Activated CD4-positive, alpha-beta memory T cell treated with anti-CD3 and anti-CD28 coated beads, Interleukin-2, amount 10 ng/mL, durations not matched to agents 7 days and 5 days (primary cell): ENCODE measurements at regions of chr16 and their contacts with region 1.

Region 1: GRCh38 chr16:27235055-27235937 is 32.0 kb downstream of the KDM8 start:
- DNase-seq: peak; percentile 96
- H3K4me3 Mint-ChIP-seq: peak overlapping the region; percentile 67
- H3K27ac Mint-ChIP-seq: peak overlapping the region; percentile 100
- H3K4me1 Mint-ChIP-seq: peaks cover 98% of the 10 kb centered on the region
- H3K27me3 Mint-ChIP-seq: no peaks in the 10 kb centered on the region

Region 2: GRCh38 chr16:27203429-27204231 is 31.7 kb before region 1 on chr16 and contains the start of gene KDM8:
- CTCF ChIA-PET with region 1: interaction called, 23 read pairs
- POLR2A ChIA-PET with region 1: interaction called, 51 read pairs
- DNase-seq: peak; percentile 100
- H3K4me3 Mint-ChIP-seq: peak within 1 kb of the TSS; percentile 95
- H3K27ac Mint-ChIP-seq: peak within 1 kb of the TSS; percentile 99
- H3K4me1 Mint-ChIP-seq: peaks cover 56% of the 10 kb centered on the region
- H3K27me3 Mint-ChIP-seq: no peaks in the 10 kb centered on the region
- total RNA-seq, gene KDM8: 12.7 to 14.3 TPM

Region 3: GRCh38 chr16:27258241-27258734 is 23.0 kb after region 1 on chr16:
- CTCF ChIA-PET with region 1: interaction called, 10 read pairs
- POLR2A ChIA-PET with region 1: interaction called, 114 read pairs
- DNase-seq: no peak
- H3K4me3 Mint-ChIP-seq: no peak overlapping the region
- H3K27ac Mint-ChIP-seq: no peak overlapping the region
- H3K4me1 Mint-ChIP-seq: peaks cover 67% of the 10 kb centered on the region
- H3K27me3 Mint-ChIP-seq: no peaks in the 10 kb centered on the region

Region 4: GRCh38 chr16:27286451-27286850 is 51.2 kb after region 1 on chr16:
- CTCF ChIA-PET with region 1: interaction called, 4 read pairs
- POLR2A ChIA-PET with region 1: interaction called, 26 read pairs
- DNase-seq: no peak
- H3K4me3 Mint-ChIP-seq: no peak overlapping the region
- H3K27ac Mint-ChIP-seq: no peak overlapping the region
- H3K4me1 Mint-ChIP-seq: peaks cover 66% of the 10 kb centered on the region
- H3K27me3 Mint-ChIP-seq: peaks cover 20% of the 10 kb centered on the region

Region 5: DNA sequence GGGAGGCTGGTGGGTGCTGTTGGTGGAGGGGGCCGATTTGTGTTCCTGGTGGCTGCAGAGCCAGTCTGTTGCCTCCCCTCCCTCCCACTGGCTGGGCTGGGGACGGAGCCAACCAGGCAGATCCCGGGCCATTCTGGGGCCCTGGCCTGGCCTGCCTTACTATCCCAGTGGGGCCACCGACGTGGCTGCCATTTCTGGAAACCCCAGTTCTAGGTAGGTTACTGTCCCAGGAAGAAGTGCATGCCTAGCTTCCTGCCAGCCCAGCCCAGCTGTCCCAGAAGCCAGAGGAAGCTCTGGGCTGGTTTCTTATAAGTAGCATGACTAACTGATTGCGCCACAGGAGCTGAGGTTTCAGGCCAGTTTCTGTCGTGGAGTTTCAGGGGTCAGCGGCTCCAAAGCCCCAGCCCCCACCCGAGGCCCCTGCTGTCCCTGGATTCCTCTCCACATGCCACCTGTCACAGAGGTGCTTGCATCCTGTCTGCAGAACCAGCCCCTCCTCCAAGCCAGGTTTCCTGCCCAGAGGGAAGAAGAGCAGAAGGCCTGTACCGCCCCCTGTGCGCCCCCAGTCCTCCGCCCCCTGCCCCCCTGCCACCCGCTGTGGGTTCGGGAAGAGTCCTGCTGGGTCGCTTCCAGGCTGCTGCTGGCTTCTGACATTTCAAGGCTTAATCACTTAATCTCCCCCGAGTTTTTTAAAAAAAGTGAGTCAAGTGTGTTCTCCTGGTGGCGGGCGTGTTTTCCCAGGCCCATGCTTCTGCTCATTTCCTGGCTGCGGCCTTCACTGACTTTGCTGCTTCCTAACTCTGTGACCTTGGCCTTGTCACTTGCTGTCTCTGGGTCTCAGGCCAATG is 91.7 kb after region 1 on chr16:
- CTCF ChIA-PET with region 1: interaction called, 146 read pairs
- POLR2A ChIA-PET with region 1: interaction called, 448 read pairs
- DNase-seq: peak; percentile 53
- H3K4me3 Mint-ChIP-seq: peak overlapping the region; percentile 49
- H3K27ac Mint-ChIP-seq: peak overlapping the region; percentile 86
- H3K4me1 Mint-ChIP-seq: peaks cover 88% of the 10 kb centered on the region
- H3K27me3 Mint-ChIP-seq: no peaks in the 10 kb centered on the region

Region 6: GRCh38 chr16:27367461-27368357 is 132.4 kb after region 1 on chr16:
- CTCF ChIA-PET with region 1: interaction called, 35 read pairs
- POLR2A ChIA-PET with region 1: interaction called, 82 read pairs
- DNase-seq: peak; percentile 87
- H3K4me3 Mint-ChIP-seq: peak overlapping the region; percentile 52
- H3K27ac Mint-ChIP-seq: peak overlapping the region; percentile 96
- H3K4me1 Mint-ChIP-seq: peaks cover 55% of the 10 kb centered on the region
- H3K27me3 Mint-ChIP-seq: no peaks in the 10 kb centered on the region